ENCODE measurements at regions of chr3 and their contacts with region 1.

Region 1: DNA sequence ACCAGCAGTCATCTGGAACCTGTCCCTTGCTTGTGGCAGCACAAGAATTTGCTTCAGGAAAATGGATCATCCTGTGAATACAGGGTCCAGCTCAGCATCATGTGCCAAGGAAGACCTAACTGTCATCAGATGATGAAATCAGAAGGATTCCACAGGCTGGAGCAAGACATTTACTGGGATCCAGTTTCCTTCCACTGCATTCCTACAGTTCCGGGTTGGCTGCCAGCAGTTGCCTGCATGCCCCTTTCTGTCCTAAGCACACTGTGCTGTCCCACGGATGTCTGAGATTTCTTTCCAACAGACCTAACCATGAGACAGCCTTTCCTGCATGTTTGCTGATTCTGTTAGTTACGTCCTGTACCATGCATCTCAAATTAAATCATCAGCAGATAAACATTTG is 140.7 kb downstream of the IMPG2 start:
- DNase-seq: no peak
- H3K4me3 ChIP-seq: no peak overlapping the region
- H3K27ac ChIP-seq: no peak overlapping the region
- H3K4me1 ChIP-seq: no peaks in the 10 kb centered on the region
- H3K27me3 ChIP-seq: no peaks in the 10 kb centered on the region
- CTCF ChIP-seq: no peak
- EP300 ChIP-seq: no peak
- POLR2A ChIP-seq: no peak
- RAD21 ChIP-seq: no peak

Region 2: DNA sequence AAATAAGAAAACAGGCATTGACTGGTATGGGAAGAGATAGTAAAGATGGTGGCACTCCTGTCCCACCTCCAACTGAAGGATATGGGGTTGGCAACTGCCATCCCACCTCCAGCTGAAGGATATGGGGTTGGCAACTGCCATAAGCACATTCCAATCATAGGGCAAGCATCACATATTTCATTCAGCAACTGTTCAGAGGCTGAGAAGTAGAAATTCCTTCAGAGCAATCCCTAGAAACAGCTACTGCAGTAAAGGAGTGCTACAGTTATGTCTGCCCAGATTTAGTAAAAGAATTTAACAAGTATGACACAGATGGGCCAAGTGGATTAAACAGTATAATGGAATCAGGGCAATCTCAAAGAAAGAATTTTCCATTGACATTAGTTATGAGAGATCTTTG is 16.1 kb before region 1 on chr3:
- CTCF ChIA-PET with region 1: no interaction called
- POLR2A ChIA-PET with region 1: no interaction called
- DNase-seq: no peak
- H3K4me3 ChIP-seq: no peak overlapping the region
- H3K27ac ChIP-seq: no peak overlapping the region
- H3K4me1 ChIP-seq: no peaks in the 10 kb centered on the region
- H3K27me3 ChIP-seq: no peaks in the 10 kb centered on the region
- CTCF ChIP-seq: no peak
- EP300 ChIP-seq: no peak
- POLR2A ChIP-seq: no peak
- RAD21 ChIP-seq: no peak

Region 3: GRCh38 chr3:101189796-101190195 is 10.2 kb after region 1 on chr3:
- CTCF ChIA-PET with region 1: interaction called, 12 read pairs
- POLR2A ChIA-PET with region 1: no interaction called
- DNase-seq: no peak
- H3K4me3 ChIP-seq: no peak overlapping the region
- H3K27ac ChIP-seq: no peak overlapping the region
- H3K4me1 ChIP-seq: no peaks in the 10 kb centered on the region
- H3K27me3 ChIP-seq: no peaks in the 10 kb centered on the region
- CTCF ChIP-seq: no peak
- EP300 ChIP-seq: no peak
- POLR2A ChIP-seq: no peak
- RAD21 ChIP-seq: no peak

Region 4: DNA sequence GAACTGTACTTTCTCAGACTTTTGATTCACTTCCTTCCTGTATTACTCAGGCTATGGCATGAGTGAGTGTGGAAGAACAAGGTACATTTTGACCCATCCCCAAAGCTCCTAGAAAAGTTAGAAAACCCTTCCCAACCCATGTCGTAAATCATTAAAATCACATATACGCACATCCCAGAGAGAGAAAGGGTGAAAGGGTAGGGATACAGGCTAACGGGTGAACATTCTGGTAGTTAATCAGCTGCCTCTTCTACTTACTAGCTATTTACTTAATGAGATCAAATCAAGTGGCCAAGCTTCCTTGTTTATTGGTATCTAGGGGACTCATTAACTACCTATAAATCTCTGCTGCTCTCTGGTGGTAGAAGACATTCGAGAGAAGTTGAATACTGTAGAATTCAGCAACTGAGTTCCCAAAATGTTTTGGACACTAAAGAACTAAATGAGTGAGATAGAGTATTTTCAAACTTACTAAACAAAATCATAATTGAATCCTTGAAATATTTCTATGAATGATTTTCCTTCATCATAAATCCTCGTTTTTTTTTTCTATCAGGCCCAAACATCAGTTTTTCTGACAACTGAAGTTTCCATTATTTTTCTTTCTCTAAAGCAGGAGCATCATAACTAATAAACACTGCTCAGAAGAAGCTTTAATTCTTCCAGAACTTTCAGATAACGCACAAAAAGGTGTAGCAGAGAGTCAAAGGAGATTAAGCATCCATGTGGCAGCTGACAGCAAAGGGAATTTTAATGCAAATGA is 16.5 kb after region 1 on chr3:
- CTCF ChIA-PET with region 1: interaction called, 14 read pairs
- POLR2A ChIA-PET with region 1: no interaction called
- DNase-seq: no peak
- H3K4me3 ChIP-seq: no peak overlapping the region
- H3K27ac ChIP-seq: no peak overlapping the region
- H3K4me1 ChIP-seq: no peaks in the 10 kb centered on the region
- H3K27me3 ChIP-seq: no peaks in the 10 kb centered on the region
- CTCF ChIP-seq: peak in 2 of 3 experiments; percentile 47; a peak in 2 of 4 replicates
- EP300 ChIP-seq: no peak
- POLR2A ChIP-seq: no peak
- RAD21 ChIP-seq: peak; percentile 83 to 87